ENCODE measurements at regions of chr19 and their contacts with region 1.

Region 1: DNA sequence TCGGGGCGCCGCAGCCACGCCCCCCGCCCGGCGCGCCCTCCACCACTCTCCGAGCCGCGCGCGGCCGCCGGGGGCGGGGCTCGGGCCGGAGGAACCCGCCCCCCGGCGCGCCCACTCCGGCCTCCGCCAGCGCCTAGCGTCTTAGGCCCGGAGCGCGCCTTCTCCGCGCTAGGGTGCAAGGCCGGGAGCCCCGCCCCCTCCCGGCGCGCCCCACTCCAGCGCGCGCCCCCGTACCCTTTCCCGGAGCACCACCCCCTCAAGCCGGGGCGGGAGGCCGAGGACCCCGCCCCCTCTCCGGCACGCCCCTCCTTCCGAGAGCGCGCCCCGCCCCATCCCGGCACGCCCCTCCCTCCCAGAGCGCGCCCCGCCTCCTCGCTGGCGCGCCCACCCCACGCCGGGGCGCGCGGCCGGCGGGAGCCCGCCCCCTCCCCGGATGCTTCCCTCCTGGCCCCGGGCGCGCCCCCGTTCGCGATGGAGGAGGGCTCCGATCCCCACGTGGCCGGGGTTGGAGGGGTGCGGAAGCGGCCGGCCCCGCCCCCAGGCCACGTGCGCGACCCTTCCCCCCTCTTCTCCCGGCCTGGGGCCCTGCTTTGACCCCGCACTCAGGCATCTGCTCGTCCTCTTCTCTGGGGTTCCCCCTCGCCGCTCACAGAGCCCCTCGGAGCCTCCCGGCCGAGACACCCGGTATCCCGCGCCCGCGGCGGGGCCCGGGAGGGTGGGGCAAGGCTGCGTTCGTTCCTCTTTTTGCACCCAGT is 524 bp upstream of the KLF16 start:
- DNase-seq: peak; percentile 74 to 76
- ATAC-seq: peak; percentile 83
- H3K4me3 ChIP-seq: peak overlapping the region; percentile 67 to 95 (median 82)
- H3K27ac ChIP-seq: peak overlapping the region; percentile 76 to 92 (median 84)
- H3K4me1 ChIP-seq: peaks cover 7 to 18% of the 10 kb centered on the region in 2 donors
- H3K27me3 ChIP-seq: peaks cover 0 to 8% (median 6%) of the 10 kb centered on the region in 3 donors
- CTCF ChIP-seq: no peak
- POLR2A ChIP-seq: peak; percentile 33 to 34

Region 2: GRCh38 chr19:1700002-1700732 is 163.7 kb before region 1 on chr19:
- in situ Hi-C with region 1: no loop called
- intact Hi-C with region 1: no loop called
- DNase-seq: no peak
- ATAC-seq: no peak
- H3K4me3 ChIP-seq: no peak overlapping the region
- H3K27ac ChIP-seq: no peak overlapping the region
- H3K4me1 ChIP-seq: no peaks in the 10 kb centered on the region
- H3K27me3 ChIP-seq: peaks cover 38 to 49% (median 39%) of the 10 kb centered on the region in 3 donors
- CTCF ChIP-seq: no peak
- POLR2A ChIP-seq: no peak

Region 3: GRCh38 chr19:1837625-1838105 is 26.2 kb before region 1 on chr19:
- in situ Hi-C with region 1: no loop called
- intact Hi-C with region 1: no loop called
- DNase-seq: no peak
- ATAC-seq: peak in 1 of 2 donors; percentile 53
- H3K4me3 ChIP-seq: no peak overlapping the region
- H3K27ac ChIP-seq: no peak overlapping the region
- H3K4me1 ChIP-seq: peaks cover 0 to 49% of the 10 kb centered on the region in 2 donors
- H3K27me3 ChIP-seq: no peaks in the 10 kb centered on the region
- CTCF ChIP-seq: peak; percentile 33 to 74 (median 66)
- POLR2A ChIP-seq: no peak

Region 4: DNA sequence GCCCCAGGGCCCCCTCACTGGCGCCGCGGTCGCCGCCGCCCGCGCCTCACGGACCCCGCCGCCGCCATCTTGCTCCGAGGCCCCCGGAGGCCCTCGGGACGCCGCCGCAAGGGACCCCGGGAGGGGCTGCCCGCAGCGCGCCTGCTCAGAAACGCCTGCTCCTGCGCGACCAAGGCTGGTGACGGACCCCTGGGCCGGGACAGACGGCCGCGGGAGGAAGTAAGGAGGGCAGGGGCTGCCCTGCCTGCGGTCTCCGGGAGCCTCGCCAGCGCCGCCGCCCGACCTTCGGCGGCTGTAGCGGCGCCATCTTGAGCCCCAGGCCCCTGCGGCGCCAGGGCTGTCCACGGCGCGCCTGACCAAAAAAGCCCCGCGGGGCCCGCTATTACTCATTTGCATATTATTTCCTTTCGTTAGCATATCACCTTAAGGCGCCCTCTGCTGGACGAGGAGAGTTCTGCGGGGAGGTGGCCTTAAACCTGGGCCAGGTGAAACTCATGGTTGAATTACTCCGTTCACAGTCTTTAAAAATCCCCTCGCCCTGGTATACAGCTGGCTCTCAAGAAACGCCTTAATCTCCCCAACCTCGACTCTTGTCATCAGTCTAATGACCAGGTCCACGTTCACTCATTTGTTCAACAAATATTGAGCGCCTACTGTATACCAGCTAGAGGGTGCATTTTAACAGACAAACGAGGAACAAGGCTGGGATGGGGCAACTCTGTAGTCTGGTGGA is 15.3 kb before region 1 on chr19 and contains the start of gene REXO1:
- in situ Hi-C with region 1: no loop called
- intact Hi-C with region 1: loop called (anchors 1 kb)
- DNase-seq: peak; percentile 85 to 95
- ATAC-seq: peak; percentile 95 to 96
- H3K4me3 ChIP-seq: peak within 1 kb of the TSS; percentile 80 to 100 (median 96)
- H3K27ac ChIP-seq: peak within 1 kb of the TSS; percentile 92 to 100 (median 98)
- H3K4me1 ChIP-seq: peaks cover 39 to 41% of the 10 kb centered on the region in 2 donors
- H3K27me3 ChIP-seq: peaks cover 0 to 3% (median 0%) of the 10 kb centered on the region in 3 donors
- CTCF ChIP-seq: peak; percentile 89 to 95 (median 92)
- POLR2A ChIP-seq: peak; percentile 73 to 85
- total RNA-seq, gene REXO1: 10.8 to 28.5 (median 20.5) TPM

Region 5: GRCh38 chr19:1905071-1905862 is 41.4 kb after region 1 on chr19 and contains the starts of genes ADAT3 and SCAMP4:
- in situ Hi-C with region 1: no loop called
- intact Hi-C with region 1: loop called (anchors 1 kb)
- DNase-seq: peak; percentile 99
- ATAC-seq: peak; percentile 98 to 99
- H3K4me3 ChIP-seq: peak within 1 kb of the TSS; percentile 65 to 90 (median 72)
- H3K27ac ChIP-seq: peak within 1 kb of the TSS; percentile 85 to 91 (median 88)
- H3K4me1 ChIP-seq: peaks cover 4 to 15% of the 10 kb centered on the region in 2 donors
- H3K27me3 ChIP-seq: no peaks in the 10 kb centered on the region
- CTCF ChIP-seq: peak in 1 of 5 experiments; percentile 17
- POLR2A ChIP-seq: peak; percentile 85 to 88
- total RNA-seq, gene ADAT3: 2.1 to 3.6 (median 3.1) TPM
- total RNA-seq, gene SCAMP4: 18.8 to 38.4 (median 26.7) TPM